ENCODE measurements at regions of chr2 and their contacts with region 1.

Region 1: DNA sequence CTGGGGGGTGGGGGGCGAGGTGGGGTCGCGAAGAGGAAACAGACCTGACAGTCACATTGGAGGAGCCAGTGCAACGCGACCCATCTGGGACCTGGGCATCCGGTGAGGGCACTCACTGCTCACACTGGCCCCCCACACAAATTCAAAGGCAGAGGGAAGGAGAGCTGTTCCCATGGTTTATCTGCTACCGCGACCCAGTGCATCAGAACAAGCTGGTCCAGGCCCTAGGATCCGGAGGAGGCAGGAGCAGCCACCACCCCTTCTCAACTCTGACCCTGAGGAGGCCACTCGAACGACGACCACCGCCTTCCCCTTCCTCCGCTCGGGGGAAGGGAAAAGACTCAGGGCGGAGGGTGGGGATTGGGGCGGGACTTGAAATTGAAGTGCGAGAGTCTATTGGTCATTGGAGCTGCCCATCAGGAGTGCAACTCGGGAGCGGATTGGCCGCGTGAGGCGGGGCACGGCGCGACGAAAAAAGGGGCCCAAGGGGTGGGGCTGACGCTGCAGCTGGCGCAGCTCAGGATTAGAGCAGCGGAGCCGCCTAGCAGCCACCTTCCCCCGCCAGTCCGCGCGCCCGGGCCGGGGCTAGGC is at the start of gene CDK5R2:
- DNase-seq: peak; percentile 89
- ATAC-seq: peak; percentile 98
- H3K4me3 Mint-ChIP-seq: peak within 1 kb of the TSS; percentile 43
- H3K27ac Mint-ChIP-seq: no peak within 1 kb of the TSS
- H3K4me1 Mint-ChIP-seq: peaks cover 11% of the 10 kb centered on the region
- H3K27me3 Mint-ChIP-seq: peaks cover 68% of the 10 kb centered on the region
- total RNA-seq, gene CDK5R2: not detected

Region 2: DNA sequence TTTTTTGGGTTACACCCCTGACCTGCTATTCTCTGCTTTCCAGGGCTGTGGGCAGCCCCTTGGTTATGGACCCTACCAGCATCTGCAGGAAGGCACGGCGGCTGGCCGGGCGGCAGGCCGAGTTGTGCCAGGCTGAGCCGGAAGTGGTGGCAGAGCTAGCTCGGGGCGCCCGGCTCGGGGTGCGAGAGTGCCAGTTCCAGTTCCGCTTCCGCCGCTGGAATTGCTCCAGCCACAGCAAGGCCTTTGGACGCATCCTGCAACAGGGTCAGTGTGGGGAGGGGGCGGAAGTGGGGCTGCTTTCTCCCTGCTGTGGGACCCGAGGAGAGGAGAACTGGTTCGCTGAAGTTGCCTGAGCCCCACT is 88.3 kb before region 1 on chr2:
- CTCF ChIA-PET with region 1: interaction called, 10 read pairs
- POLR2A ChIA-PET with region 1: no interaction called
- intact Hi-C with region 1: loop called in 1 of 2 experiments (anchors 5 kb)
- DNase-seq: no peak
- ATAC-seq: no peak
- H3K4me3 Mint-ChIP-seq: peak overlapping the region; percentile 44
- H3K27ac Mint-ChIP-seq: no peak overlapping the region
- H3K4me1 Mint-ChIP-seq: peaks cover 17% of the 10 kb centered on the region
- H3K27me3 Mint-ChIP-seq: peaks cover 53% of the 10 kb centered on the region

Region 3: GRCh38 chr2:218876562-218877219 is 82.5 kb before region 1 on chr2:
- CTCF ChIA-PET with region 1: interaction called, 10 read pairs
- POLR2A ChIA-PET with region 1: no interaction called
- intact Hi-C with region 1: loop called in 1 of 2 experiments (anchors 5 kb)
- DNase-seq: peak; percentile 83
- ATAC-seq: no peak
- H3K4me3 Mint-ChIP-seq: no peak overlapping the region
- H3K27ac Mint-ChIP-seq: no peak overlapping the region
- H3K4me1 Mint-ChIP-seq: peaks cover 43% of the 10 kb centered on the region
- H3K27me3 Mint-ChIP-seq: peaks cover 39% of the 10 kb centered on the region

Region 4: DNA sequence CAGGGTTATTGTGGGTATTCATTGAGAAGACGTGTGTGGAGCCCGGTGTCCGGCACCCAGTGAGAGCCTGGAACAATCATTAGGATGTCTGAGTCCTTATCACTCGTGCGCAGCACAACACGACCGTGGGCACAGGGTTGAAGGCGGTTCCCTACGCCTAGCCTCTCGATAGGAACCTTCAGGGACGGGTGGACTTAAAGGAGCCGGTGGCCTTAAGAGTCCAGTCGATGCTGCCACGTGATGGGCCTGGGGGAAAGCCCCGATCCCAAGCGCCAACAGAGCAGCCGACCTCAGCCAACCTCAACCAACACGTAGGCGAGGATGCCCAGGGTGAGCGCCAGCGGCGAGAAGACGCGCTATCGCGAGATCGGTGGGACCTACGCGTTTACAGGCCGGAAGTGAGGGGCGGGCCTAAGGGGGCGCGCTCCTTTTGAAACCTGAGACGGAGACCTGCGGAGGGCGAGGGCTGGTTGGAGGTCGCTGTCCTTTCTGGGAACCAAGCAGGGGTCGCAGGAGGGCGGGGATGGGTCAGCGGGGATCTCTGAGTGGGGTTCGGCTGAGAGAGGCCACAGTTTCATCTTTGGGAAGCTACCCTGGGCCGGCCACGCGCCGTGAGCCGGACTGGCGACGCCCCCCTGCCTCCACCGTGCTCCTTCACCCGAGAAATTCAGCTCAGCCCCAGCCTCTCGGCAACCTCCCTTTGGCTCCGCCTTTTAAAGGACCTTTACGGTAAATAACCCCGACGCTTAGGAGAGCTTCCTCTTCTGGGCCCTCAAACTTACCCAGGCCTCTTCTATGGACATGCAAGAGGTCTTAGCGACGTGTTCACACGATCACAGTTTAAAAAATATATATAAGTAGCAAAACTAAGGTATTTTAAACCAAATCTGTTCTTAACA is 50.3 kb before region 1 on chr2:
- CTCF ChIA-PET with region 1: interaction called, 4 read pairs
- POLR2A ChIA-PET with region 1: interaction called, 3 read pairs
- intact Hi-C with region 1: loop called (anchors 1 to 5 kb)
- DNase-seq: peak; percentile 97
- ATAC-seq: peak; percentile 98
- H3K4me3 Mint-ChIP-seq: peak overlapping the region; percentile 85
- H3K27ac Mint-ChIP-seq: peak overlapping the region; percentile 83
- H3K4me1 Mint-ChIP-seq: peaks cover 13% of the 10 kb centered on the region
- H3K27me3 Mint-ChIP-seq: peaks cover 16% of the 10 kb centered on the region

Region 5: GRCh38 chr2:219308142-219309093 is 349.2 kb after region 1 on chr2:
- CTCF ChIA-PET with region 1: no interaction called
- POLR2A ChIA-PET with region 1: no interaction called
- intact Hi-C with region 1: loop called in 1 of 2 experiments (anchors 5 kb)
- DNase-seq: peak; percentile 87
- ATAC-seq: peak; percentile 92
- H3K4me3 Mint-ChIP-seq: no peak overlapping the region
- H3K27ac Mint-ChIP-seq: no peak overlapping the region
- H3K4me1 Mint-ChIP-seq: peaks cover 7% of the 10 kb centered on the region
- H3K27me3 Mint-ChIP-seq: peaks cover 38% of the 10 kb centered on the region

Measured in activated CD4-positive, alpha-beta T cell treated with anti-CD3 and anti-CD28 coated beads for 36 hours (primary cell).